Mammary epithelial cell (primary cell): ENCODE measurements at regions of chr4 and their contacts with region 1.

Region 1: DNA sequence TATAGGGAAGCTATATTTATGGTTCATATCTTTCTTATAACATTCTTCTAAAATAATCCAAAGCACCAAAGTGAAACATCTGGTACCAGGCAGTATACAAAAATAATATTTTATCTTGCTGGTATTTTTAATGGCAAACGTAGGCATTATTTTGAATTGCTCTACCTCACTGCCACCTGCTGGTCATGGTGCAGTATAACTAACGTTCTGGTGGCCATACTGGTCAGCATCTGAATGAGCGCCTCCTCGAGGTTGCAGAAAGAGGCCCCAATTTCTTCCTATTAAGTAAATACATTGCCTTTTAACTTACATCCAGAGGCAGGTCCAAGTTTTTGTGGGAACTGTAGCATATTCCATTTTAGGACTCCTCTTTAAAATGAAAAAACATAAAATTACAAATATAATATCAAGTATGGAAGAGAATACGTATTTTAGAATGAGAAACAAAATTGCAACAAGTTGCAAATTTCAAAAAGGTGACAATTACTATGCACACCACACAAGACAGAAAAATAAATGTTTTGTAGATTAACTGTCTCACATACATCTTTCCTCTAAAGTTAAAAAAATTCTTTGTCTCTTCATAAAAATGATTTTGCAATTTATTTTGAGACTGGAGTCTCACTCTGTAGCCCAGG is 22.9 kb upstream of the CWH43 start:
- DNase-seq: peak; percentile 71
- H3K4me3 ChIP-seq: no peak overlapping the region
- H3K27ac ChIP-seq: no peak overlapping the region
- H3K4me1 ChIP-seq: peaks cover 29% of the 10 kb centered on the region
- H3K27me3 ChIP-seq: no peaks in the 10 kb centered on the region
- CTCF ChIP-seq: peak; percentile 98 to 100

Region 2: GRCh38 chr4:48578132-48578968 is 384.8 kb before region 1 on chr4:
- CTCF ChIA-PET with region 1: no interaction called
- dilution Hi-C with region 1: no loop called
- in situ Hi-C with region 1: no loop called
- intact Hi-C with region 1: loop called (anchors 1 kb)
- DNase-seq: peak; percentile 51
- H3K4me3 ChIP-seq: no peak overlapping the region
- H3K27ac ChIP-seq: no peak overlapping the region
- H3K4me1 ChIP-seq: no peaks in the 10 kb centered on the region
- H3K27me3 ChIP-seq: no peaks in the 10 kb centered on the region
- CTCF ChIP-seq: peak; percentile 79 to 90

Region 3: DNA sequence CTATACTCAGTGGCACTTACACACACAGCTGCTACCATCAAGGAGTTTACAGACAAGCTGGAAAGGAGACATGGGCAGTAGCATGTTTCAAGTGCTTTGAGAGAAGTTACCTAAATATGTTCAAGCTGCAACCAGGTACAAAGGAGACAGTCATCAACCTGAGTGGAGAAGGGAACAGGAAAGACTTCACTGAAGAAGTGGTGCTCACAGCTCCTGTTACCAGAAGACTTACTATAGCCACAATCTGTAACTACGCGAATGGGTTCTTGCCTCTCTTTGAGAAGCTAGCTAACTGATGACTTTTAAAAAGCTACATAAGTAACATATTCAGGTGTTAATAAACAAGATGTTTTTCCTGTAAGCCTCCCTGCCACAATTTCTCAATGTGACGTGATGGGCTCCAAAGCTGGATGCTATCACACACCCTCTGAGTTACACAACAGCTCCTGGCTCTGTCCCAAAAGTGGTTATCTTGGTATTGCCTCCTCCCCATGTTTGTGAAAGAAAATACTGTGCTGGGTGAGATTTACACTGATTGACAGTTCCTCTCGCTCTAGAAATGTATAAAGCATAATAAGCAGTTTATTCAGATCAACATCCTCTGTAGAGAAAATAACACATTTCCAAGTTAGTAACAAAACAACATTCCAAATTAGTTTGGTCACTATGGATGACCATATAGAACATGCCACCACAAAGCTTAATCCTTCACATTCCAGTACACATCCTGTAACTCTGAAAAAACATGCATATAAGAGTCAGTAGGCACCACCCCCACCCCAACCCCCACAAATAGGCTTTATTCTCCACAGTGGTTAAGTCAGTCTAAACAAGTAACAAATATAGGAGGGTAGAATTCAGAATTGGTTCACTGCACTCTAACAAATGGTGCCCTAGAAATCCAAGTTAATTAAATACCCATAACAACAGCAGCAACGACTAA is 264.9 kb before region 1 on chr4:
- CTCF ChIA-PET with region 1: interaction called, 4 read pairs
- dilution Hi-C with region 1: no loop called
- in situ Hi-C with region 1: no loop called
- intact Hi-C with region 1: loop called (anchors 2 kb)
- DNase-seq: peak; percentile 94
- H3K4me3 ChIP-seq: peak overlapping the region in 2 of 3 experiments; percentile 5 to 66
- H3K27ac ChIP-seq: peak overlapping the region; percentile 100
- H3K4me1 ChIP-seq: peaks cover 46% of the 10 kb centered on the region
- H3K27me3 ChIP-seq: no peaks in the 10 kb centered on the region
- CTCF ChIP-seq: no peak

Region 4: GRCh38 chr4:48830706-48831531 is 132.2 kb before region 1 on chr4 and contains the start of gene OCIAD1:
- CTCF ChIA-PET with region 1: no interaction called
- dilution Hi-C with region 1: no loop called
- in situ Hi-C with region 1: no loop called
- intact Hi-C with region 1: loop called (anchors 2 kb)
- DNase-seq: peak; percentile 98
- H3K4me3 ChIP-seq: peak within 1 kb of the TSS; percentile 50 to 98 (median 98)
- H3K27ac ChIP-seq: peak within 1 kb of the TSS; percentile 94
- H3K4me1 ChIP-seq: peaks cover 9% of the 10 kb centered on the region
- H3K27me3 ChIP-seq: no peaks in the 10 kb centered on the region
- CTCF ChIP-seq: no peak
- total RNA-seq, gene OCIAD1: 85.5 to 125 TPM

Region 5: DNA sequence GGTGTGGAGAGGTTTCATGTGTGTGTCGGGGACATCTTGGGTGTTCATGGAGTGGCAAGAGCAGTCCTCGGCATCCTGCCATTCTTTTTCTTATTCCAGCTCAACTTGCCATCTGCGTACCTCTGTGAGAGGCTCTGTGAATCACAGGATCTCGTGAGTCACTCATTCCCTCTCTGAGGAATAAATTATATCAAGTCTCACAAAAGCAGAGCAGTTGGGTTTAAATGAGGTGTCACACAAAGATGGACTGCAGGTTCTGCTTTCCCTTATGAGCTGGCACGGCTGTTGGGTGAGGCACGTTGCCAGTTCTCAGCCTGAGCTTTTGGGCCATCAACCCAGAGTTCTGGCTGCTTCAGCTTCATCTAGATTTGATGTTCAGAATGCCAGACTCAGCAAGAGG is 49.8 kb before region 1 on chr4:
- CTCF ChIA-PET with region 1: no interaction called
- dilution Hi-C with region 1: no loop called
- in situ Hi-C with region 1: loop called in 1 of 2 experiments (anchors 10 kb)
- intact Hi-C with region 1: loop called (anchors 2 kb)
- DNase-seq: peak; percentile 90
- H3K4me3 ChIP-seq: no peak overlapping the region
- H3K27ac ChIP-seq: peak overlapping the region; percentile 46
- H3K4me1 ChIP-seq: peaks cover 34% of the 10 kb centered on the region
- H3K27me3 ChIP-seq: no peaks in the 10 kb centered on the region
- CTCF ChIP-seq: no peak